Naive thymus-derived CD4-positive, alpha-beta T cell (primary cell): ENCODE measurements at regions of chr9 and their contacts with region 1.

Region 1: GRCh38 chr9:125143375-125144090 is at the start of gene SCAI:
- DNase-seq: peak; percentile 85 to 99 (median 98)
- ATAC-seq: peak; percentile 99
- H3K4me3 ChIP-seq: peak within 1 kb of the TSS; percentile 73
- H3K4me3 Mint-ChIP-seq: peak within 1 kb of the TSS; percentile 90 to 99 (median 97)
- H3K27ac ChIP-seq: peak within 1 kb of the TSS; percentile 70
- H3K27ac Mint-ChIP-seq: peak within 1 kb of the TSS; percentile 82 to 94 (median 89)
- H3K4me1 ChIP-seq: peaks cover 0 to 17% of the 10 kb centered on the region in 2 donors
- H3K4me1 Mint-ChIP-seq: peaks cover 21 to 52% (median 44%) of the 10 kb centered on the region in 7 donors
- H3K27me3 ChIP-seq: no peaks in the 10 kb centered on the region
- H3K27me3 Mint-ChIP-seq: no peaks in the 10 kb centered on the region
- total RNA-seq, gene SCAI: 12.8 to 23.9 (median 16.6) TPM

Region 2: GRCh38 chr9:124861342-124862229 is 281.9 kb before region 1 on chr9 and contains the starts of genes ARPC5L and RPL35:
- CTCF ChIA-PET with region 1: interaction called, 3 read pairs
- POLR2A ChIA-PET with region 1: no interaction called
- intact Hi-C with region 1: loop called in 1 of 2 experiments (anchors 2 kb)
- DNase-seq: peak; percentile 91 to 97 (median 95)
- ATAC-seq: peak; percentile 98
- H3K4me3 ChIP-seq: peak within 1 kb of the TSS; percentile 88
- H3K4me3 Mint-ChIP-seq: peak within 1 kb of the TSS; percentile 89 to 99 (median 95)
- H3K27ac ChIP-seq: peak within 1 kb of the TSS; percentile 87
- H3K27ac Mint-ChIP-seq: peak within 1 kb of the TSS; percentile 91 to 99 (median 96)
- H3K4me1 ChIP-seq: peaks cover 7 to 16% of the 10 kb centered on the region in 2 donors
- H3K4me1 Mint-ChIP-seq: peaks cover 7 to 36% (median 29%) of the 10 kb centered on the region in 7 donors
- H3K27me3 ChIP-seq: no peaks in the 10 kb centered on the region
- H3K27me3 Mint-ChIP-seq: no peaks in the 10 kb centered on the region
- total RNA-seq, gene ARPC5L: 20.0 to 66.1 (median 33.1) TPM
- total RNA-seq, gene RPL35: 1,415 to 1,987 (median 1,778) TPM

Region 3: DNA sequence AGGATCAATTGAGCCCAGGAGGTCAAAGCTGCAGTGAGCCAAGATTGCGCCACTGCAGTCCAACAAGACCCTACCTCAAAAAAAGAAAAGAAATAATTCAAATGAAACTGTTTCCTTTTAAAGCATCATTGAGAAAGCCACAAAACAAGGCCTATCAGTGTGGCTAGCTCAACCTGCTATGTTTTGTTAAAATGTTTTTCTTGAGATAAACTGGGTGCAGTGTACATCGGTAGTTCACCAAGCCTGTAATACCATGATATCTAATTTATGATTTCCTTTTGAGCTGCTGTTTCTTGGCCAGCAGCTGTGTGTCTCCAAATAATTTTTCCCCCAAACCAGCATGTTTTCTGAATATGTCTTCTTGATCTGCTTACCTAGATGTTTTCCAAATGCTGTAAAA is 105.4 kb before region 1 on chr9:
- CTCF ChIA-PET with region 1: no interaction called
- POLR2A ChIA-PET with region 1: interaction called, 5 read pairs
- intact Hi-C with region 1: loop called in 1 of 2 experiments (anchors 5 kb)
- DNase-seq: no peak
- ATAC-seq: no peak
- H3K4me3 ChIP-seq: no peak overlapping the region
- H3K4me3 Mint-ChIP-seq: no peak overlapping the region
- H3K27ac ChIP-seq: no peak overlapping the region
- H3K27ac Mint-ChIP-seq: peak overlapping the region in 1 of 9 donors; percentile 28
- H3K4me1 ChIP-seq: no peaks in the 10 kb centered on the region
- H3K4me1 Mint-ChIP-seq: peaks cover 0 to 6% (median 0%) of the 10 kb centered on the region in 7 donors
- H3K27me3 ChIP-seq: no peaks in the 10 kb centered on the region
- H3K27me3 Mint-ChIP-seq: no peaks in the 10 kb centered on the region

Region 4: DNA sequence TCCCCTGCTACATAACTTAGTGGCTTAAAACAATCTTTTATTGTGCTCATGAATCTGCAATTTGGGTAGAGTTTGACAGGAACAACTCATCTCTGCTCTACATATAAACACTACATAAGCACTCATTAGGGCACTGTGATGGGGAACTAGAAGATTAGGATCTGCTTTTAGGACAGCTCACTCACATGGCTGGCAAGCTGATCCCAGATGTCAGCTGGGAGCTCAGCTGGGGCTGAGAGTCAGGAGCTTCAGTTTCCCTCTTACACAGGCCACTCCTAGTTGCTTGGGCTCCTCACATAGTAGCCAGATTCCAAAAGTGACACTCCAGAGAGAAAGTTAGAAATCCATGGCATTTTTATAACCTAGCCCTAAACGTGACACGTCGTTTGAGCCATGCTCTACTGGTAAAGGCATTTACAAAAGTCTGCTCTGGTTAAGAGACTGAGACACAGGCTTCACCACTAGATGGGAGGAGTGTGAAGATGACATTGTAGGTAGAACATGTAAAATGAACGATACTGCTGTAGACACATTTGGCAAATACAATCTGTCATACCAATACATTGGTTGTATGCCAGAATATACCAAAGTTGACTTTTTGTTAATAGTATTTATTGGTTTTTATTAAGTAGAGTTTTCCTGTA is 23.8 kb before region 1 on chr9:
- CTCF ChIA-PET with region 1: interaction called, 25 read pairs
- POLR2A ChIA-PET with region 1: interaction called, 6 read pairs
- intact Hi-C with region 1: loop called (anchors 1 kb)
- DNase-seq: peak in 7 of 9 donors; percentile 37 to 65 (median 50)
- ATAC-seq: peak; percentile 78
- H3K4me3 ChIP-seq: no peak overlapping the region
- H3K4me3 Mint-ChIP-seq: peak overlapping the region in 6 of 10 donors; percentile 35 to 59 (median 50)
- H3K27ac ChIP-seq: no peak overlapping the region
- H3K27ac Mint-ChIP-seq: peak overlapping the region; percentile 55 to 84 (median 75)
- H3K4me1 ChIP-seq: peaks cover 4 to 22% of the 10 kb centered on the region in 2 donors
- H3K4me1 Mint-ChIP-seq: peaks cover 19 to 58% (median 42%) of the 10 kb centered on the region in 7 donors
- H3K27me3 ChIP-seq: no peaks in the 10 kb centered on the region
- H3K27me3 Mint-ChIP-seq: no peaks in the 10 kb centered on the region

Region 5: GRCh38 chr9:125153712-125154367 is 10.3 kb after region 1 on chr9:
- CTCF ChIA-PET with region 1: no interaction called
- POLR2A ChIA-PET with region 1: no interaction called
- intact Hi-C with region 1: no loop called
- DNase-seq: no peak
- ATAC-seq: no peak
- H3K4me3 ChIP-seq: no peak overlapping the region
- H3K4me3 Mint-ChIP-seq: no peak overlapping the region
- H3K27ac ChIP-seq: no peak overlapping the region
- H3K27ac Mint-ChIP-seq: peak overlapping the region in 1 of 9 donors; percentile 47
- H3K4me1 ChIP-seq: no peaks in the 10 kb centered on the region
- H3K4me1 Mint-ChIP-seq: peaks cover 2 to 18% (median 9%) of the 10 kb centered on the region in 7 donors
- H3K27me3 ChIP-seq: no peaks in the 10 kb centered on the region
- H3K27me3 Mint-ChIP-seq: no peaks in the 10 kb centered on the region

Region 6: GRCh38 chr9:125189361-125190289 is 46.1 kb after region 1 on chr9 and contains the start of gene PPP6C:
- CTCF ChIA-PET with region 1: no interaction called
- POLR2A ChIA-PET with region 1: interaction called, 3 read pairs
- intact Hi-C with region 1: loop called (anchors 1 kb)
- DNase-seq: peak; percentile 92 to 97 (median 96)
- ATAC-seq: peak; percentile 98
- H3K4me3 ChIP-seq: peak within 1 kb of the TSS; percentile 99
- H3K4me3 Mint-ChIP-seq: peak within 1 kb of the TSS; percentile 89 to 99 (median 96)
- H3K27ac ChIP-seq: peak within 1 kb of the TSS; percentile 98
- H3K27ac Mint-ChIP-seq: peak within 1 kb of the TSS; percentile 90 to 97 (median 95)
- H3K4me1 ChIP-seq: peaks cover 35 to 51% of the 10 kb centered on the region in 2 donors
- H3K4me1 Mint-ChIP-seq: peaks cover 35 to 79% (median 57%) of the 10 kb centered on the region in 7 donors
- H3K27me3 ChIP-seq: no peaks in the 10 kb centered on the region
- H3K27me3 Mint-ChIP-seq: peaks cover 0 to 4% (median 0%) of the 10 kb centered on the region in 5 donors
- total RNA-seq, gene PPP6C: 32.9 to 54.2 (median 49.5) TPM

Region 7: DNA sequence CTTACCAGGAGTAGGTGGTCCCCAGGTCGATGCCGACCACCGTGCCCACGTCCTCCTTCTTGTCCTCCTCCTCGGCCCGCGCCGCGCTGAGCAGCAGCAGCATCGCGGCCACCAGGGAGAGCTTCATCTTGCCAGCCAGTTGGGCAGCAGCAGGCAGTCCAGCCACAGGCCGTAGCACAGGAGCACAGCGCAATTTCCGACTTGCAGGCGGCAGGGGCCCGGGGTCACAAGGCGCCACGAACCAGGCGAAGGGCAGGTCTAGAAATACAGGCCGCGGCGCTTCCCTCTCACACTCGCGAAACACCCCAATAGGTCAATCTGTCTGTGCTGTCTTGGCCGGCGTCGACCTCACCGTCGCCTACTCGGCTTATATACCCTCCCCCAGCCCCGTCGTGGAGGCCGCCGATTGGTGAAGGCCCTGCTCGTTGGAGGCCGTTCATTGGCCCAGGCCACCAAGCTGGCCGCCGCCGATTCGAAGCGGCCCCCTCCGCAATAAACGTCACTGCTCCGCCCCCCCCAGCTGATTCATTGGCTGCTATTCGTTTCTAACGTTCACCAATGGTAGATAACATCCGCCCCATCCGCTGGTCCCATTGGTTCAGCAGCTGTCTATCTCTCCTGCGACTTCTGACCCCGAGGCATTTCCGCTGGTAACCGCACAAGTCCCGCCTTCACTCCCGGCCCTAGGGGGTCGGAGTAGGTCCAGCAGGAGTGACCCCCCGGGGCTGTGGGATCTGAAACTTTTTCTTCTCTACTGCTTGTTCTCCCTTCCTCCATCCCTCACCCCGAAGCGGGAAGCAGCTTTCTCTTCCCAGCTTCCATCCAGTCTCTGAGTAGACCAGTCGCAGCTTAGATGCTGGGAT is 97.7 kb after region 1 on chr9 and contains the start of gene HSPA5:
- CTCF ChIA-PET with region 1: no interaction called
- POLR2A ChIA-PET with region 1: interaction called, 16 read pairs
- intact Hi-C with region 1: loop called (anchors 1 to 2 kb)
- DNase-seq: peak; percentile 94 to 100 (median 99)
- ATAC-seq: peak; percentile 94
- H3K4me3 ChIP-seq: peak within 1 kb of the TSS; percentile 85
- H3K4me3 Mint-ChIP-seq: peak within 1 kb of the TSS; percentile 94 to 99 (median 98)
- H3K27ac ChIP-seq: peak within 1 kb of the TSS; percentile 97
- H3K27ac Mint-ChIP-seq: peak within 1 kb of the TSS; percentile 96 to 100 (median 99)
- H3K4me1 ChIP-seq: peaks cover 39 to 48% of the 10 kb centered on the region in 2 donors
- H3K4me1 Mint-ChIP-seq: peaks cover 27 to 49% (median 45%) of the 10 kb centered on the region in 7 donors
- H3K27me3 ChIP-seq: no peaks in the 10 kb centered on the region
- H3K27me3 Mint-ChIP-seq: peaks cover 0 to 5% (median 0%) of the 10 kb centered on the region in 5 donors
- total RNA-seq, gene HSPA5: 127 to 248 (median 155) TPM

Region 8: GRCh38 chr9:125374443-125375309 is 231.1 kb after region 1 on chr9:
- CTCF ChIA-PET with region 1: no interaction called
- POLR2A ChIA-PET with region 1: no interaction called
- intact Hi-C with region 1: loop called (anchors 1 to 5 kb)
- DNase-seq: peak; percentile 37 to 74 (median 64)
- ATAC-seq: peak; percentile 86
- H3K4me3 ChIP-seq: peak overlapping the region; percentile 46
- H3K4me3 Mint-ChIP-seq: peak overlapping the region in 8 of 10 donors; percentile 36 to 76 (median 64)
- H3K27ac ChIP-seq: no peak overlapping the region
- H3K27ac Mint-ChIP-seq: peak overlapping the region in 1 of 9 donors; percentile 55
- H3K4me1 ChIP-seq: peaks cover 0 to 9% of the 10 kb centered on the region in 2 donors
- H3K4me1 Mint-ChIP-seq: peaks cover 5 to 10% (median 6%) of the 10 kb centered on the region in 7 donors
- H3K27me3 ChIP-seq: no peaks in the 10 kb centered on the region
- H3K27me3 Mint-ChIP-seq: peaks cover 0 to 8% (median 2%) of the 10 kb centered on the region in 5 donors